ENCODE measurements at regions of chr1 and their contacts with region 1.

Region 1: GRCh38 chr1:115052454-115053083 is 22.9 kb downstream of the TSHB start:
- DNase-seq: no peak
- ATAC-seq: peak; percentile 75
- H3K4me3 Mint-ChIP-seq: no peak overlapping the region
- H3K27ac Mint-ChIP-seq: no peak overlapping the region
- H3K4me1 Mint-ChIP-seq: no peaks in the 10 kb centered on the region
- H3K27me3 Mint-ChIP-seq: peaks cover 2% of the 10 kb centered on the region
- CTCF ChIP-seq: peak; percentile 93

Region 2: DNA sequence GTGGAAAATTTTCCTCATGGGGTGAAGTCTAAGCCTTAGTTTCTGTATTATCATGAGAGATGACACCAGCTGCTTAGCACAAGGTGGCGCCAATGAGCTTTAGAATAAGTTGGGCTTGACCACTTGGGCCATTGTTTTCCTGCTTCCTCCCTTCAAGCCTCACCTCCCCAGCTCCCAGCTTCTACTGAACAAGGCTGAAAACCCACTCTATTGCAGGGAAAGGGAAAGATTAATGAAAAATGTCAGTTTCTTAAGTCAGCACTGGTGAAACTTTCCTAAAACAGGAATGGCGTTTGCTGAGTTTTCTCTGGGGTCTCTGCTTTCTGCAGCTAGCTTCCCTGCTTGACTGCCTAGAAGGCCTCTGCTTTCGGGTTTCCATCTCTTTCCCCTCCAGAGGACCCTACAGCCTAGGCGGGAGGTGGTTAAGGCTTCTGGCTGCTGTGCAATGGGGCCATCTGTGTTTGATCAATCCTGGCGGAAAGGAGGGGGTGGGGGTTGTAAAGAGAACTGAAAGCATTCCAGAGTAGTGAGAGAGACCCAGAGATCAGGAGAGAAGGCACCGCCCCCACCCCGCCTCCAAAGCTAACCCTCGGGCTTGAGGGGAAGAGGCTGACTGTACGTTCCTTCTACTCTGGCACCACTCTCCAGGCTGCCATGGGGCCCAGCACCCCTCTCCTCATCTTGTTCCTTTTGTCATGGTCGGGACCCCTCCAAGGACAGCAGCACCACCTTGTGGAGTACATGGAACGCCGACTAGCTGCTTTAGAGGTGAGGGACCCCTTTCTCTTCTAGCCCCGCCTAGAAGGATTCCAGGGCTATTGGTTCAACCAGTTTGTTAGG is 1073.5 kb before region 1 on chr1 and contains the start of gene OLFML3:
- CTCF ChIA-PET with region 1: interaction called, 3 read pairs
- POLR2A ChIA-PET with region 1: no interaction called
- intact Hi-C with region 1: loop called (anchors 1 kb)
- DNase-seq: no peak
- ATAC-seq: no peak
- H3K4me3 Mint-ChIP-seq: no peak within 1 kb of the TSS
- H3K27ac Mint-ChIP-seq: no peak within 1 kb of the TSS
- H3K4me1 Mint-ChIP-seq: peaks cover 14% of the 10 kb centered on the region
- H3K27me3 Mint-ChIP-seq: no peaks in the 10 kb centered on the region
- CTCF ChIP-seq: no peak
- total RNA-seq, gene OLFML3: 0.27 and 0.29 TPM in 2 replicates

Region 3: GRCh38 chr1:114979278-114979891 is 73.2 kb before region 1 on chr1:
- CTCF ChIA-PET with region 1: interaction called, 5 read pairs
- POLR2A ChIA-PET with region 1: no interaction called
- intact Hi-C with region 1: loop called (anchors 2 kb)
- DNase-seq: no peak
- ATAC-seq: no peak
- H3K4me3 Mint-ChIP-seq: no peak overlapping the region
- H3K27ac Mint-ChIP-seq: no peak overlapping the region
- H3K4me1 Mint-ChIP-seq: no peaks in the 10 kb centered on the region
- H3K27me3 Mint-ChIP-seq: peaks cover 27% of the 10 kb centered on the region
- CTCF ChIP-seq: no peak

Region 4: GRCh38 chr1:115112496-115113375 is 60.2 kb after region 1 on chr1:
- CTCF ChIA-PET with region 1: interaction called, 15 read pairs
- POLR2A ChIA-PET with region 1: no interaction called
- intact Hi-C with region 1: loop called (anchors 5 kb)
- DNase-seq: peak; percentile 45
- ATAC-seq: peak; percentile 40
- H3K4me3 Mint-ChIP-seq: no peak overlapping the region
- H3K27ac Mint-ChIP-seq: no peak overlapping the region
- H3K4me1 Mint-ChIP-seq: no peaks in the 10 kb centered on the region
- H3K27me3 Mint-ChIP-seq: no peaks in the 10 kb centered on the region
- CTCF ChIP-seq: peak; percentile 75

Measured in activated B cell treated with CpG ODN at 0.5 μM for 24 hours (primary cell).